ENCODE measurements at regions of chr15 and their contacts with region 1.

Region 1: DNA sequence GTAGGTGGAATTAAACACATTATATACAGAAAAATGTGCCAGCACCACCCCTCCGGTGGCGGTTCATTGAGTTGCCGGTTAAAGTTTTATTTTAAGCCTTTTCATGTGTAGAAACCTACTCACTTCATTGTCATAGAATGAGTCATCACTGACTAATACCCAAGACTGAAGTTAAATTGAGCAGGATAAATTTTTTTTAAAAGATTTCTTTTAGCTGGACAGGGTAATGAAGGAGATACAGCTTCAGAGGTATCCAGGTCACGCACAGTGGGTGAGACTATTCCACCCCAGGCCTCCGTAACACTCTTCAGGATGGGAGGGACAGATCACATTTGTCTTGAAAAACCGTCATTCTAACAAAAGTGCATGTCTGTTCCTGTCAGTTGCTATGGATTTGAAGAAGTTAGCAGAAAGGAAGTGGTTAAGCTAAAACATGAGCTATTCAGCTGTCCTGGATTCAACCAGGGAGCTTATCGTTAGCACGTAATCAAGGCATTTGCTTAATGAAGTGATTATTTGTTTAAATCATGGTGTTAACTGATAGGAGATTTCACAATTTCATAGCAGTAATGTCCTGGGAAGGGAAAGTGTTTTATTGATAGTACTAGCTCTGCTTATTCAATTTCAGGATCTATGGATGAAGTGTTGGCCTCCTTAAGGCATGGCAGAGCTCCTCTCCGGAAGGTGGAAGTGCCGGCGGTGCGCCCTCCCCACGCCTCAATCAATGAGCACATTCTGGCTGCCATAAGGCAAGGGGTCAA is 23.4 kb downstream of the WHAMM start:
- DNase-seq: peak; percentile 30
- H3K4me3 Mint-ChIP-seq: peak overlapping the region; percentile 49
- H3K27ac Mint-ChIP-seq: peak overlapping the region; percentile 91
- H3K4me1 Mint-ChIP-seq: peaks cover 46% of the 10 kb centered on the region
- H3K27me3 Mint-ChIP-seq: no peaks in the 10 kb centered on the region

Region 2: DNA sequence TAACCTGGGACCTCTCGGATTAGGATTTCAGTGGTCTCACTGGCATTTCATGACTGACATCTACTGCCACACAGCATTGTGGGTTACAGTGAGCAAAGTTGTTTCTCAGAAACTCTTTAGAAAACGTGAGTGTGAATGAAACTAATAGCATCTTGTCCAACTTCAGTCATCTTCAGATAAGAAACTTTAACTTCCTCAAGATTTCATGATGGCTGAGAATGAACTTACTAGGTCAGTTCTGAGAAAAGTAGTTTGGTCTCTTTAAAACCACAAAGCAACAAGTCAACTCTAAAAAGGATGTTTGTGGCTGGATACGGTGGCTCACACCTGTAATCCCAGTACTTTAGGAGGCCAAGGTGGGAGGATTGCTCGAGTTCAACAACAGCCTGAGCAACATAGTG is 133.9 kb after region 1 on chr15:
- intact Hi-C with region 1: loop called (anchors 5 kb)
- DNase-seq: peak; percentile 20
- H3K4me3 Mint-ChIP-seq: no peak overlapping the region
- H3K27ac Mint-ChIP-seq: no peak overlapping the region
- H3K4me1 Mint-ChIP-seq: peaks cover 30% of the 10 kb centered on the region
- H3K27me3 Mint-ChIP-seq: peaks cover 10% of the 10 kb centered on the region

Measured in activated T-helper 2 cell treated with anti-CD3 and anti-CD28 coated beads, Interferon-gamma antibody, Interleukin-2, Interleukin-4, amounts not matched to agents 10 μg/mL and 5 μg/mL and 100 μg/mL, durations not matched to agents 14 hours and 24 hours and 36 hours (primary cell).